ENCODE measurements at regions of chr7 and their contacts with region 1.

Region 1: DNA sequence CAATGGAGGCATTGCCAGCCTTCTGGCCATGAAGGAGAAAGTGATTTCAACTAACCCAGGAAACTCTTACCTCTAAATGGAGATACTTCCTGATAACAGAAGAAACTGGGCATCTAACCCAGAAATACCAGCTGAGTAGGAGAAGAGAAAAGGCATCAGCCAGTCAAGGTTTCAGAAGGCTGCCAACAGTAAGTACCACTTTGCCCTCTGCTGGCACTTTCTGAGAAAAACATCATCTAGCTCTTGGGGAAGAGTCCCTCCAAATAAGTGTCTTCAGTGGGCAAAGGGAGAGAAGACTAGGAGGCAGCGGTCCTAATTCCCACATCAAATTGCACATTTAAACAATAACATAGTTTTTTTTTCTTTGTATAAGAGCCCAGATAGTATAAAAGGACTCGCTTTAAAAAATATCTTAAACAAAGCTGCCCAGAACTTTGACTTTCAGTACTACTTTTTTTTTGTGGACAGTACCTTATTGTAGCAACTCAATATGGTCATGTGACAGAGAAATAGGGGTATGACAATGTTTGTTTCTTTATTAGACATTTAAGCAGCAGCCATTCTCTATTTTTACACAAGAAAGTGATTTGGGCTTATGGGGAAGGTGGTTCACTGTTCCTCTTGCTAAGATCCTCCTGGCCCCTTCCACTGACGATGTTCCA is 157.3 kb downstream of the CTTNBP2 start:
- DNase-seq: peak; percentile 39
- ATAC-seq: peak; percentile 79
- H3K4me3 ChIP-seq: no peak overlapping the region
- H3K27ac ChIP-seq: no peak overlapping the region
- H3K4me1 ChIP-seq: no peaks in the 10 kb centered on the region
- H3K27me3 ChIP-seq: no peaks in the 10 kb centered on the region
- CTCF ChIP-seq: peak; percentile 62
- EP300 ChIP-seq: no peak
- POLR2A ChIP-seq: no peak
- RAD21 ChIP-seq: no peak

Region 2: GRCh38 chr7:116159711-116160110 is 1556.2 kb before region 1 on chr7:
- CTCF ChIA-PET with region 1: no interaction called
- POLR2A ChIA-PET with region 1: no interaction called
- in situ Hi-C with region 1: no loop called
- intact Hi-C with region 1: loop called (anchors 5 kb)
- DNase-seq: no peak
- ATAC-seq: no peak
- H3K4me3 ChIP-seq: no peak overlapping the region
- H3K27ac ChIP-seq: no peak overlapping the region
- H3K4me1 ChIP-seq: no peaks in the 10 kb centered on the region
- H3K27me3 ChIP-seq: 0 out of 5 replicates have a peak, but pooled peaks cover 0 to 4% of the 10 kb centered on the region in 2 experiments
- CTCF ChIP-seq: no peak
- EP300 ChIP-seq: no peak
- POLR2A ChIP-seq: no peak
- RAD21 ChIP-seq: no peak

Region 3: DNA sequence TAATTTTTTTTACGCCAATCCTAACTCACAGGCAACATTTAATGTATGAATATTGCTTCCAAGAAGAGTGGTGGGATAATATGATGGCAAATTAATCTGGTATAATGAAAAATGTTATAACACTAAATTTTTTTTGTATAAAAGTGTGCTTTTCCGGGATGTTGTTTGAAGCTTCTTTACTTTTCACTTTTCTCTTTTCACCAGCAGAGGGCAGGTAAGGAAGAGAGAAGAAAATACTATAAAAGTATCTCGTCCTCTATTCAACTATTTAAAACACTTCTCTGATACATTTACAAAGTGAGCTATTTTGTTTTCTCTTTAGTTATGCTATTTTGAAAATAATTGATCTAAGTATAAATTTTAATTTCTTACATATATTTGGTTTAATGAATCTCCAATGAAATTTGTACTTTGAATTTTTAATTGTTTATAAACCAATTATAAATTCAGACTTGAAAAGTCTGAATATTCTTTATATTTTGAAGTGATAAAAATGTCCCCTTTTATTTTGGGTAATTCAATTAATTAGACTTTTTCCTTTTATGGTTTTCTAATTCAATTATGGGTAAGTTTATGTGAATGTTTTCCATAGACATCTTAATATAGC is 256.8 kb before region 1 on chr7:
- CTCF ChIA-PET with region 1: interaction called, 11 read pairs
- POLR2A ChIA-PET with region 1: no interaction called
- in situ Hi-C with region 1: loop called (anchors 25 kb)
- intact Hi-C with region 1: loop called (anchors 1 kb)
- DNase-seq: peak; percentile 18
- ATAC-seq: no peak
- H3K4me3 ChIP-seq: no peak overlapping the region
- H3K27ac ChIP-seq: no peak overlapping the region
- H3K4me1 ChIP-seq: no peaks in the 10 kb centered on the region
- H3K27me3 ChIP-seq: no peaks in the 10 kb centered on the region
- CTCF ChIP-seq: peak; percentile 35
- EP300 ChIP-seq: no peak
- POLR2A ChIP-seq: no peak
- RAD21 ChIP-seq: no peak

Region 4: GRCh38 chr7:117648203-117648866 is 67.6 kb before region 1 on chr7:
- CTCF ChIA-PET with region 1: no interaction called
- POLR2A ChIA-PET with region 1: no interaction called
- in situ Hi-C with region 1: no loop called
- intact Hi-C with region 1: no loop called
- DNase-seq: no peak
- ATAC-seq: no peak
- H3K4me3 ChIP-seq: no peak overlapping the region
- H3K27ac ChIP-seq: no peak overlapping the region
- H3K4me1 ChIP-seq: no peaks in the 10 kb centered on the region
- H3K27me3 ChIP-seq: no peaks in the 10 kb centered on the region
- CTCF ChIP-seq: no peak
- EP300 ChIP-seq: no peak
- POLR2A ChIP-seq: no peak
- RAD21 ChIP-seq: no peak